HepG2 (cell line): ENCODE measurements at regions of chr5 and their contacts with region 1.

Region 1: GRCh38 chr5:143592648-143593047 is 189.2 kb upstream of the NR3C1 start:
- DNase-seq: no peak
- ATAC-seq: no peak
- H3K4me3 ChIP-seq: no peak overlapping the region
- H3K27ac ChIP-seq: peak overlapping the region; percentile 39
- H3K4me1 ChIP-seq: peaks cover 86% of the 10 kb centered on the region
- H3K27me3 ChIP-seq: no peaks in the 10 kb centered on the region
- CTCF ChIP-seq: no peak
- EP300 ChIP-seq: no peak
- POLR2A ChIP-seq: no peak
- RAD21 ChIP-seq: no peak

Region 2: DNA sequence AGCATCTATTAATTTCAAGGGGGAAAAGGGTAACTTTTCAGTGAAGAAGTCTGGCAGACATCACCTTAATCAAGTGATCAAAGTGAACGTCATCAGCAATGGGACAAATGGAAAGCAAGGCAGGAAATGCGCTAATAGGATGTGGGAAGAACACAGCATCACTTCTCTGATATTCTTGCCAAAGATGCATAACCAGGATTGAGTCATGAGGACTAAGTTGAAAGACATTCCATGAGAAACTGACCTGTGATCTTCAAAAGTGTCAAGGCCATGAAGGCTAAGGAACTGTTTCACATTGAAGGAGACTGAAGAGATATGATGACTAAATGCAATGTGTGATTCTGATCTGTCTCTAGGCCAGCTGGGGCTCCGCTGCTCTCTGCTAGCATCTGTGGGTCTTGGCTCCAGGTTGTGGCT is 1391.2 kb before region 1 on chr5:
- CTCF ChIA-PET with region 1: no interaction called
- POLR2A ChIA-PET with region 1: no interaction called
- in situ Hi-C with region 1: no loop called
- intact Hi-C with region 1: no loop called
- DNase-seq: no peak
- ATAC-seq: no peak
- H3K4me3 ChIP-seq: no peak overlapping the region
- H3K27ac ChIP-seq: no peak overlapping the region
- H3K4me1 ChIP-seq: peaks cover 9% of the 10 kb centered on the region; the same call in 1 of the 2 replicates
- H3K27me3 ChIP-seq: peaks cover 5 to 24% of the 10 kb centered on the region in 2 experiments
- CTCF ChIP-seq: no peak
- EP300 ChIP-seq: no peak
- POLR2A ChIP-seq: no peak
- RAD21 ChIP-seq: no peak

Region 3: GRCh38 chr5:142783601-142784341 is 808.9 kb before region 1 on chr5:
- CTCF ChIA-PET with region 1: no interaction called
- POLR2A ChIA-PET with region 1: no interaction called
- in situ Hi-C with region 1: no loop called
- intact Hi-C with region 1: no loop called
- DNase-seq: no peak
- ATAC-seq: peak; percentile 37; the same call in 1 of the 3 replicates
- H3K4me3 ChIP-seq: no peak overlapping the region
- H3K27ac ChIP-seq: no peak overlapping the region
- H3K4me1 ChIP-seq: peaks cover 51% of the 10 kb centered on the region
- H3K27me3 ChIP-seq: no peaks in the 10 kb centered on the region
- CTCF ChIP-seq: no peak
- EP300 ChIP-seq: no peak
- POLR2A ChIP-seq: no peak
- RAD21 ChIP-seq: no peak

Region 4: GRCh38 chr5:143506881-143507551 is 85.6 kb before region 1 on chr5:
- CTCF ChIA-PET with region 1: no interaction called
- POLR2A ChIA-PET with region 1: interaction called, 7 read pairs
- in situ Hi-C with region 1: loop called (anchors 5 kb)
- intact Hi-C with region 1: loop called (anchors 1 kb)
- DNase-seq: peak; percentile 99
- ATAC-seq: peak; percentile 98
- H3K4me3 ChIP-seq: peak overlapping the region in 2 of 3 experiments; percentile 0 to 49; a peak in 1 of 6 replicates
- H3K27ac ChIP-seq: peak overlapping the region; percentile 99
- H3K4me1 ChIP-seq: peaks cover 49% of the 10 kb centered on the region
- H3K27me3 ChIP-seq: no peaks in the 10 kb centered on the region
- CTCF ChIP-seq: peak; percentile 58
- EP300 ChIP-seq: peak; percentile 76 to 99
- POLR2A ChIP-seq: peak in 1 of 2 experiments; percentile 46; a peak in 1 of 4 replicates
- RAD21 ChIP-seq: peak; percentile 41; the same call in 1 of the 2 replicates

Region 5: GRCh38 chr5:143554187-143554717 is 38.4 kb before region 1 on chr5:
- CTCF ChIA-PET with region 1: interaction called, 3 read pairs
- POLR2A ChIA-PET with region 1: interaction called, 13 read pairs
- in situ Hi-C with region 1: no loop called
- intact Hi-C with region 1: no loop called
- DNase-seq: no peak
- ATAC-seq: no peak
- H3K4me3 ChIP-seq: no peak overlapping the region
- H3K27ac ChIP-seq: peak overlapping the region; percentile 78
- H3K4me1 ChIP-seq: peaks cover 71% of the 10 kb centered on the region
- H3K27me3 ChIP-seq: no peaks in the 10 kb centered on the region
- CTCF ChIP-seq: no peak
- EP300 ChIP-seq: no peak
- POLR2A ChIP-seq: no peak
- RAD21 ChIP-seq: no peak

Region 6: DNA sequence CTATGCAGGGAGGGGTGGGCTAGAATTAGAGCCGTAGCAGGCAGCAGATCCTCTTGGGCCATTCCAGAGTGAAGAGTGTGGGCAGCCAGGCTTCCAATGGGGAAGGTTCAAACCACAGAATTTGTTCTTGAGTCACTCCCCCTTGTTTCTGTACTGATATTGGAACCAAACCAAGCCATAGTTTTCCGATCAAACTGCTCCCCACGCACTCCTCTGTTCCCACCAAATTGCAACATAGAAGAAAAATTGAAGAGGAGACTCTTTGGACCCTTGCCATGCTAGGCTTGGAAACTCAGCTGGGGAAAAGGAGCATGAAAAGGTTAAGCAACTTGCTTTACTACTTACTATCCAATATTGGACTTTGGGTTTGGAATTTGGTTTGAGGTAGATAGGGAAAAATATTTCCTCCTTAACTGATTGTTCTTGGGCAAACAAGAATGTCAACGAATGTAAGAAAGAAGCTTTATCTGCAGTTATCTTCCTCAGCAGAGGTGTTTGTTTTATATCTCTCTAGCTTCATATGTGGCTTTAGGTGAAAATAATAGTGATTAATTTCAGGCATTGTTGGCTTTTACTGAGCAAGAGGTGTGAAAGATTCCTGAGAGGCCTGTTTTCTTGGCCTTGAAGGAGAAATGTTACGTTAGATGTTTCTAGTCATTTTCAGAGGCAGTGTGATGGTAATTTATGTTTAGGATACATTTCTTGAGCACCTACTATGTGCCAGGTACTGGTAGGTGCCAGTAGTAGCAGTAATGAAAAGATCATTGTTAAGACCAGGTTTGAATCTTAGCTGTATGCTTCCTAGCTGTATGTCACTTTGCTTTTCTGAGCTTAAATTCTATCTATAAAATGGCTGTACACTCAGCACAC is 23.2 kb before region 1 on chr5:
- CTCF ChIA-PET with region 1: no interaction called
- POLR2A ChIA-PET with region 1: interaction called, 15 read pairs
- in situ Hi-C with region 1: no loop called
- intact Hi-C with region 1: loop called (anchors 2 kb)
- DNase-seq: peak; percentile 82
- ATAC-seq: peak; percentile 58
- H3K4me3 ChIP-seq: no peak overlapping the region; a peak in 1 of 6 replicates
- H3K27ac ChIP-seq: peak overlapping the region; percentile 66
- H3K4me1 ChIP-seq: peaks cover 37% of the 10 kb centered on the region
- H3K27me3 ChIP-seq: no peaks in the 10 kb centered on the region
- CTCF ChIP-seq: no peak
- EP300 ChIP-seq: peak in 1 of 2 experiments; percentile 67; a peak in 1 of 4 replicates
- POLR2A ChIP-seq: no peak
- RAD21 ChIP-seq: no peak

Region 7: GRCh38 chr5:143685246-143685802 is 92.7 kb after region 1 on chr5:
- CTCF ChIA-PET with region 1: no interaction called
- POLR2A ChIA-PET with region 1: interaction called, 4 read pairs
- in situ Hi-C with region 1: no loop called
- intact Hi-C with region 1: loop called (anchors 10 kb)
- DNase-seq: peak; percentile 24
- ATAC-seq: no peak
- H3K4me3 ChIP-seq: no peak overlapping the region
- H3K27ac ChIP-seq: no peak overlapping the region
- H3K4me1 ChIP-seq: peaks cover 34% of the 10 kb centered on the region
- H3K27me3 ChIP-seq: no peaks in the 10 kb centered on the region; a peak in 1 of 5 replicates
- CTCF ChIP-seq: peak; percentile 46
- EP300 ChIP-seq: no peak
- POLR2A ChIP-seq: no peak
- RAD21 ChIP-seq: no peak